PC-9 (cell line): ENCODE measurements at regions of chr20 and their contacts with region 1.

Region 1: GRCh38 chr20:45011108-45011526 is 44.8 kb downstream of the STK4 start:
- DNase-seq: peak; percentile 43 to 58
- H3K4me3 ChIP-seq: no peak overlapping the region
- H3K27ac ChIP-seq: no peak overlapping the region
- H3K4me1 ChIP-seq: peaks cover 46% of the 10 kb centered on the region
- H3K27me3 ChIP-seq: no peaks in the 10 kb centered on the region
- CTCF ChIP-seq: peak; percentile 94

Region 2: DNA sequence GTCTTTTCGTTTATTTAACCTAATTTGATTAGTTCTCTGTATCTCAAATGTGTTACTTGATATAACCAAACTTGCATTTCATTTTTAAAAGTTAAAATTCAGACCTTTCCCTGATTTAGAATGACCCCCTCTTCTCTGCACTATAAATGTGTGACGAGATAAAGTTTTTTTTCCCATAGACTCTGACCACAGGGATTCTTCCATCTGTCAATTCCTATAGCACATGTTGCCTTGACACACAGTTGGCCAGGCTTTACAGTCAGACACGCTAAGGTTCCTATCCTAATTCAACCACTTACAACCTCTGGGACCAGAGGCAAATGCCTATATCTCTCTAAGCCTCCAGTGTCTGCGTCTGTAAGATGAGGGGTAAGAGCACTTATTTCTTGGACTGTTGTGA is 49.2 kb after region 1 on chr20:
- CTCF ChIA-PET with region 1: interaction called, 11 read pairs
- POLR2A ChIA-PET with region 1: no interaction called
- intact Hi-C with region 1: no loop called
- DNase-seq: no peak
- H3K4me3 ChIP-seq: no peak overlapping the region
- H3K27ac ChIP-seq: peak overlapping the region; percentile 84
- H3K4me1 ChIP-seq: peaks cover 17% of the 10 kb centered on the region
- H3K27me3 ChIP-seq: no peaks in the 10 kb centered on the region
- CTCF ChIP-seq: no peak

Region 3: DNA sequence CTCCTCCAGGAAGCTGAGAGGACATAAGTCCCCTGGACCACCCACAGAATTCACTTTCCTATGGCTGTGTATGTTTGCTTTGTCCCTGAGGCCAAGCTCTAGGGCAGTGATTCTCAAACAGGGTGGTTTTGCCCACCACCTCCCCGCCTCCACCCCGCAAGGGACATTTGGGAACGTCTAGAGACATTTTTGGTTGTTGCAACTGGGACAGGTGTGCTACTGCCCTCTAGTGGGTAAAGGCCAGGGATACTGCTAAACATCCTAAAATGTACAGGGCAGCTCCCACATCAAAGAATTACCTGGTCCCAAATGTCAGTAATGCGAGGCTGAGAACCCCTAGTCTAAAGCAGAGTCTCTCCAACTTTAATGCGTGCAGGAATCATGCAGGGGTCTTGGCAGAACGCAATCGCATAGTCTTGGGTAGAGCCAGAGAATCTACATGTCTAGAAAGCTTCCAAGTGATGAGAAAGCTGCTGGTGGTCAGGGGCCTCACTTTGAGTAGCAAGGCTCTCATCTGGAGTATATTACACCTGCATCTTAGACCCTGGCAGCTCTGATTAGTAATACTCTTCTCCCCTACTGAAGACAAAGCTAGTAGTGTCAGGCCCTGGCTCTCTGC is 84.7 kb after region 1 on chr20:
- CTCF ChIA-PET with region 1: interaction called, 34 read pairs
- POLR2A ChIA-PET with region 1: no interaction called
- intact Hi-C with region 1: loop called (anchors 1 kb)
- DNase-seq: peak; percentile 54 to 65
- H3K4me3 ChIP-seq: no peak overlapping the region
- H3K27ac ChIP-seq: no peak overlapping the region
- H3K4me1 ChIP-seq: no peaks in the 10 kb centered on the region
- H3K27me3 ChIP-seq: no peaks in the 10 kb centered on the region
- CTCF ChIP-seq: peak; percentile 91

Region 4: GRCh38 chr20:45229264-45230056 is 218.3 kb after region 1 on chr20:
- CTCF ChIA-PET with region 1: interaction called, 5 read pairs
- POLR2A ChIA-PET with region 1: no interaction called
- intact Hi-C with region 1: loop called (anchors 1 kb)
- DNase-seq: peak; percentile 66 to 69
- H3K4me3 ChIP-seq: peak overlapping the region; percentile 25; the same call in 1 of the 2 replicates
- H3K27ac ChIP-seq: no peak overlapping the region
- H3K4me1 ChIP-seq: peaks cover 6% of the 10 kb centered on the region
- H3K27me3 ChIP-seq: no peaks in the 10 kb centered on the region
- CTCF ChIP-seq: peak; percentile 96

Region 5: DNA sequence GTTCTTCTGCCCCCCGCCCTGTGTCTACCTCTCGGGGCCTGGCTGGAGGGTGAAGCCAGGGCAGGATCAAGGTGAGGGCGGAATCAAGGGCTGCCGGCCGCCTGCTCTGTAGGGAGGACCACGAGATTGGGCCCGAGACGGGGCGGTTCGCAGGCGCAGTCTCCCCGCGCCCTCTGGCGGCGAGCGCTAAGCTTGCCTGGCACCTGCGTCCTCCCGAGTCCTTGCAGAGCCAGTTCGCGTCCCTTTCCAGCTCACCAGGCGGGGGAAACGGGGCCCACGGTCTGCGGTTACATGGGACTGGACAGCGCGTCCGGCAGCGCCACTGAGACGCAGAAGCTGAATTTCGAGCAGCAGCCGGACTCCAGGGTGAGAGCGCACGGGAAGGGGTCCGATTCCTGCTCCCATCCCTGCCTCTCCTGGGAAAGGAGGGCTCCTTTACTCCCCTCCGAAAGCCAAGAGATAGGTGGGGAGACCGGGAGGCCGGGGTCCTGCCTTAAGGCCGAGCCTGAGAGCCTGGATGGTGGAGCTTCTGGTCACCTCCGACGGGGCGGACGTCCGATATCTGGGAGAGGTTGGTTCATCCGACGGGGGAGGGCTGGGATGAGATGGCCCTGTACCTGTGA is 300.6 kb after region 1 on chr20:
- CTCF ChIA-PET with region 1: interaction called, 7 read pairs
- POLR2A ChIA-PET with region 1: no interaction called
- intact Hi-C with region 1: loop called (anchors 1 kb)
- DNase-seq: peak in 1 of 2 experiments; percentile 56
- H3K4me3 ChIP-seq: no peak overlapping the region
- H3K27ac ChIP-seq: no peak overlapping the region
- H3K4me1 ChIP-seq: no peaks in the 10 kb centered on the region
- H3K27me3 ChIP-seq: no peaks in the 10 kb centered on the region
- CTCF ChIP-seq: peak; percentile 75

Region 6: GRCh38 chr20:45583502-45583901 is 572.4 kb after region 1 on chr20:
- CTCF ChIA-PET with region 1: no interaction called
- POLR2A ChIA-PET with region 1: interaction called, 17 read pairs
- intact Hi-C with region 1: no loop called
- DNase-seq: no peak
- H3K4me3 ChIP-seq: no peak overlapping the region
- H3K27ac ChIP-seq: no peak overlapping the region
- H3K4me1 ChIP-seq: no peaks in the 10 kb centered on the region
- H3K27me3 ChIP-seq: no peaks in the 10 kb centered on the region
- CTCF ChIP-seq: no peak

Region 7: GRCh38 chr20:46293084-46293483 is 1282.0 kb after region 1 on chr20:
- CTCF ChIA-PET with region 1: no interaction called
- POLR2A ChIA-PET with region 1: no interaction called
- intact Hi-C with region 1: no loop called
- DNase-seq: peak in 1 of 2 experiments; percentile 61
- H3K4me3 ChIP-seq: no peak overlapping the region
- H3K27ac ChIP-seq: no peak overlapping the region
- H3K4me1 ChIP-seq: no peaks in the 10 kb centered on the region
- H3K27me3 ChIP-seq: peaks cover 99% of the 10 kb centered on the region
- CTCF ChIP-seq: no peak